BJ (cell line): ENCODE measurements at regions of chr1 and their contacts with region 1.

Region 1: DNA sequence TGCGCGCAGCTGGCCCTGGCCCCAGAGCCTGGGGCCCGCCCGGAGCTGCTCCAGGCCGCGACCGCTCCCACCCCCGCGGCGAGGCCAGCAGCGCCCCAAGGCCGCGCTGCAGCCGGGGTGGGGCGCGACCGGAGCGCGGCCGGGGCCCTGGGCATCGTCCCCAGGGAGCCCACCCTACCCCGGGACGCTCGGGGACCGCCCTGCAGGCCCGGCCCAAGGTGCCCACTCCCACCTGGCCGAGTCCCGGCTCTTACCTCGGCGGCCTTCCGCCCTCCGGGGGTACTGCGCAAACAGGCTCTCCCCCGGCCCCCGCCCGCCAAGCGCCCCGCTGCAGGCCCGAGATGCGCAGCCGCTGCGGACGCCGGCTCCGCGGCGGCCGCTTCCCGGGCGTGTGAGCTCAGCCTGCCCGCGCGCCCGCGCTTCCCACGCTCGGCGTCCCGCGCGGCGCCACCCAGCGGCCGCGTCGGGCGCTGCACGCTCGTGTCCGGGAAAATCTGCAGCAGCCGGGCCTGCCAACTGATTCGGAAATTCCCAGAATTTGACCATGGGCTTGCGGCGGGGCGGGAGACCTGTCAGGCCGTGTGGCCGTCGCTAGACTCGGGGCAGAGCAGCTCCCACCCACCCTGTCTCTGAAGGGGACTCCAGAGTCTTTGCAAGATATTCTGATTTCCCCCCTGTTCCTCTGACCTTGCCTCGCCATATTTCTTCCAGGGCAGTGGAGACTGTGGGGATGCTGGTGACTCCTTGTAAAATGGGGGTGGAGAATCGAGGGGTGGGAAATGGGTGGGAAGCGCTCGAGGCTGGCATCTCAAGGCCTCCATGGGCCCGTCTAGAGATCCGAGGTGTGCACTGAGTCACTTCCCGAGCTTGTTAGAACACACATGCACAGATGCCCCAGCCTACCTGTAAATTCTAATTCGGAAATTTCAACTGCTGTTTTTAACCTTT is 41.9 kb downstream of the CD34 start:
- DNase-seq: no peak
- H3K4me3 ChIP-seq: peak overlapping the region; percentile 75
- H3K27me3 ChIP-seq: no peaks in the 10 kb centered on the region
- CTCF ChIP-seq: peak; percentile 65

Region 2: GRCh38 chr1:207691841-207692240 is 177.2 kb before region 1 on chr1:
- CTCF ChIA-PET with region 1: no interaction called
- POLR2A ChIA-PET with region 1: no interaction called
- DNase-seq: no peak
- H3K4me3 ChIP-seq: no peak overlapping the region
- H3K27me3 ChIP-seq: peaks cover 3% of the 10 kb centered on the region; the same call in 1 of the 2 replicates
- CTCF ChIP-seq: no peak

Region 3: DNA sequence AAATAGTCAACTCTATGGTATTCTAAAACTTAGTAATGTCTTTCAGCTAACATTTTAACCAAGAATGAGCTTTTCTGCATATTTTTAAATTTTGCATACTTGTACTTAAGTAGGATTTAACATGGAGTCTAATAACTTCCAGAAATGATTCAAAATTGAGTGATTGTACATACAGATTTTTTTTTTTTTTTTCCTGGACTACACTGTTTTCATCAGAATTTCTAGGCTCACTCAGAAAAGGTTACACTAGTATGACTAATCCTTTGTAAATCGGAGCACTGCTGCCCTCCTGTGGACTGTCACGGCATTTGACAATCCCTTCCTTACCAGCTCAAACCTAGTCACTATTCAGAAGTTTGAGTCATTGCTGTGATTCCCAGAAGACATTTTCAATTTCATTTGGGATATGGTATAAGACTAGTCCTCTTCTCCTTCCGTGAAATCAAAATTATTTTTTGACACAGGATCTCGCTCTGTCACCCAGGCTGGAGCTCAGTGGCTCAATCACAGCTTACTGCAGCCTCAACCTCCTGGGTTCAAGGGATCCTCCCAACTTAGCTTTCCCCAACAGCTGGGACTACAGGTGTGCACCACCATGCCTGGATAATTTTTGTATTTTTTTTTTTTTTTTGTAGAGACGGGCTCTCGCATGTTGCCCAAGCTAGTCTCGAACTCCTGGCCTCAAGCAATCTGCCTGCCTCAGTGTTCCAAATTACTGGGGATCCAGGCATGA is 71.7 kb before region 1 on chr1:
- CTCF ChIA-PET with region 1: interaction called, 18 read pairs
- POLR2A ChIA-PET with region 1: interaction called, 6 read pairs
- DNase-seq: peak; percentile 55
- H3K4me3 ChIP-seq: no peak overlapping the region
- H3K27me3 ChIP-seq: no peaks in the 10 kb centered on the region
- CTCF ChIP-seq: peak; percentile 78

Region 4: GRCh38 chr1:207805841-207806421 is 63.1 kb before region 1 on chr1:
- CTCF ChIA-PET with region 1: interaction called, 16 read pairs
- POLR2A ChIA-PET with region 1: no interaction called
- DNase-seq: peak; percentile 91
- H3K4me3 ChIP-seq: no peak overlapping the region
- H3K27me3 ChIP-seq: no peaks in the 10 kb centered on the region
- CTCF ChIP-seq: no peak

Region 5: DNA sequence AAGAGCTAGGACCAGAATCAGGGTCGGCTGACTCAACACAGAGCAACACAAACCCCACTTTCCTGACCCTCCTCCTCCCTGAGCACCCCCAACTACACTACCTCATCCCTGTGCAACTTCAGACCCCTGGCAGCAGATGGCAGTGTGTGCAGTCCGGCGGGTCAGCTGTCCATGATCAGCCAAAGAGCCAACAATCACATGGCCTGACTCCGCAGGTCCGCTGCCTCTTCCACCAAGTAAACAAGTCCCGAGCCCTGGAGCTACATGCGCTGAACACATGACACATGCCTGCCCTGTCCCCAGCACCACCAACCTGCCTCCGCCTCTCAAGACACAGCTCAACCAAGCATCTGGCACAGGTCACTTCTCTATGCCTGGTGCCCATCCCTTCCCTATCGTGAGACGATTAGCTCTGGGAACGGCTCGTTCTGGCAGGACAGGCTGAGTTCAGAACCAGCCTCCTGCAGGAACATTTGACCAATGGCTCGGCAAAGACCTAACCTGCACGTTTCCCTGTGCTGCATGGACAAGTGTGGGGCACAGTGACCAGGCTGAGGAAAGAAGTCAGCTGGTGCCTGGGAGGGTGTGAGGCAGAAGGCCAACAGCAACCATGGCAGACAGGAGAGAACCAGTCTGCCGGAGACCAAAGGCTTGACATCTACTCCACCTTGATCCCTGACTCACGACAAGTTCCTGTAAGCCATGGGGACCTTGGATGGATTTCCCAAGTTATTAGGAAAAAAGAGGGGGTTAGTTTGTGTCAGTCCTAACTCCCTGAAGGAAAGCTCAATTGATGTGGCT is 56.9 kb before region 1 on chr1:
- CTCF ChIA-PET with region 1: interaction called, 16 read pairs
- POLR2A ChIA-PET with region 1: no interaction called
- DNase-seq: no peak
- H3K4me3 ChIP-seq: no peak overlapping the region
- H3K27me3 ChIP-seq: no peaks in the 10 kb centered on the region
- CTCF ChIP-seq: peak; percentile 64

Region 6: GRCh38 chr1:207828485-207829158 is 40.4 kb before region 1 on chr1:
- CTCF ChIA-PET with region 1: interaction called, 332 read pairs
- POLR2A ChIA-PET with region 1: interaction called, 5 read pairs
- DNase-seq: peak; percentile 59
- H3K4me3 ChIP-seq: no peak overlapping the region
- H3K27me3 ChIP-seq: no peaks in the 10 kb centered on the region
- CTCF ChIP-seq: peak; percentile 89

Region 7: DNA sequence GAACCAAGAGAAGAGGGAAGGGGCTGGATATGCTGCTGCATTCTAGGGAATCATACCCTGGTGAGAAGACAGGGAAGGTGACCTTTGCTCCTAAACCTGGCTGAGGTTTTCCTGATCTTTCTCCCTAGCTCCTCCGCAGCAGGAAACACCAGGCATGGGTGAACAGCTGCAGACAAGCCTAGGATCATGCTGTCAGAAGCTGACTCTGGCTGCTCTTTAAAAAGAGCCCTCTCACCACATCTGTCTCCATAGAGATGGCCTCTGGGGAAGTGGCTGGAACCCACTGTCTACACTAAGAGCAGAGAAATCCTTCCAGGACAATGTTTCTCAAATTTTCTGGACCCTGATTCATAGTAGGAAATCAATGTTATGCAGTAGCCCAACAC is 15.7 kb before region 1 on chr1:
- CTCF ChIA-PET with region 1: interaction called, 11 read pairs
- POLR2A ChIA-PET with region 1: no interaction called
- DNase-seq: no peak
- H3K4me3 ChIP-seq: no peak overlapping the region
- H3K27me3 ChIP-seq: no peaks in the 10 kb centered on the region
- CTCF ChIP-seq: no peak

Region 8: GRCh38 chr1:207963427-207964194 is 94.6 kb after region 1 on chr1:
- CTCF ChIA-PET with region 1: interaction called, 21 read pairs
- POLR2A ChIA-PET with region 1: no interaction called
- DNase-seq: no peak
- H3K4me3 ChIP-seq: peak overlapping the region; percentile 46
- H3K27me3 ChIP-seq: no peaks in the 10 kb centered on the region
- CTCF ChIP-seq: peak; percentile 64